OCI-LY7 (cell line): ENCODE measurements at regions of chr15 and their contacts with region 1.

Region 1: DNA sequence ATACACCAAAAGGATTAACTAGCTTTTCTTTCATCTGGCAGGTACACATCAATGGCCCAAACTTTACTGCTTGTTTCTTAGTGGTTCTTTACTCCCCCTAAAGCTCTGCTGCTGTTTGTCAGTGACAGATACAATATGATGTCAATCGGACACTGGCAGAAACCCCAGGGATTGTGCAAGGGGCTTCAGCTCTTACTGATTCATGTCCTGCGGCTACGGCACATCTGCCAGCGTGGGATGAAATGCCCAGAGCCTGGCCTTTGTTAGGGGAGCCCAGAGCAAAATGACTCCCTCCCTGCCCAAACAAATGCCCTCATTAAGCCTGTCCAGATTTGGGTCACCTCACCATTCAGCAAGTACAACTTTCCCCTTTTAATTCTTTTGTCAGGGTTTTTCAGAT is 28.3 kb downstream of the SRP14 start:
- DNase-seq: no peak
- H3K4me3 ChIP-seq: no peak overlapping the region
- H3K27ac ChIP-seq: no peak overlapping the region
- H3K4me1 ChIP-seq: no peaks in the 10 kb centered on the region
- CTCF ChIP-seq: no peak

Region 2: DNA sequence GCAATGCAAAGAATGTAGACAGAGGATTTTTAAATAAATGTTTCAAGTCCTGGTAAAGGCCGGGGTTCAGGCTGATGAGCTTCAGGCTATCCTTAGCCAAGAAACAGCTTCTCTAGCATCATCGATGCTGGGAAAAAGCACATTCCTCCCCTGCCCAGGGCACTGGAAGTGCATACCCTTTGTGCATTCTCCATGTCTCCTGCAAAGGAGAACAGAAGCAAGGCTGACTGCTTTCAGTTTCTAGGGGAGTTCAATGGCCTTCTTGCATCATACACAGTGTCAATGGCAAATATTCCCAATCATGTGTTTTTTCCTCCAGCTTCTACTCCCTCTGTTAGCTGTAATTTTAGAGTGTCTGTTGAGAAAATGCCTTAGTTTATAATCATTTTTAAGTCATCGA is 150.5 kb before region 1 on chr15:
- CTCF ChIA-PET with region 1: no interaction called
- POLR2A ChIA-PET with region 1: no interaction called
- intact Hi-C with region 1: no loop called
- DNase-seq: no peak
- H3K4me3 ChIP-seq: no peak overlapping the region
- H3K27ac ChIP-seq: no peak overlapping the region
- H3K4me1 ChIP-seq: no peaks in the 10 kb centered on the region
- CTCF ChIP-seq: no peak

Region 3: GRCh38 chr15:39987821-39988220 is 22.9 kb before region 1 on chr15:
- CTCF ChIA-PET with region 1: no interaction called
- POLR2A ChIA-PET with region 1: interaction called, 10 read pairs
- intact Hi-C with region 1: no loop called
- DNase-seq: no peak
- H3K4me3 ChIP-seq: no peak overlapping the region
- H3K27ac ChIP-seq: no peak overlapping the region
- H3K4me1 ChIP-seq: no peaks in the 10 kb centered on the region
- CTCF ChIP-seq: no peak